Activated CD4-positive, alpha-beta T cell treated with anti-CD3 and anti-CD28 coated beads, Interleukin-2, amount 10 ng/mL, durations not matched to agents 24 days and 14 days (primary cell): ENCODE measurements at regions of chr18 and their contacts with region 1.

Region 1: GRCh38 chr18:58671111-58671631 is at the start of gene MALT1:
- DNase-seq: peak; percentile 98
- H3K4me3 Mint-ChIP-seq: peak within 1 kb of the TSS; percentile 98
- H3K27ac Mint-ChIP-seq: peak within 1 kb of the TSS; percentile 92
- H3K4me1 Mint-ChIP-seq: peaks cover 61% of the 10 kb centered on the region
- H3K27me3 Mint-ChIP-seq: peaks cover 2% of the 10 kb centered on the region
- total RNA-seq, gene MALT1: 22.7 and 24.9 TPM in 2 replicates

Region 2: DNA sequence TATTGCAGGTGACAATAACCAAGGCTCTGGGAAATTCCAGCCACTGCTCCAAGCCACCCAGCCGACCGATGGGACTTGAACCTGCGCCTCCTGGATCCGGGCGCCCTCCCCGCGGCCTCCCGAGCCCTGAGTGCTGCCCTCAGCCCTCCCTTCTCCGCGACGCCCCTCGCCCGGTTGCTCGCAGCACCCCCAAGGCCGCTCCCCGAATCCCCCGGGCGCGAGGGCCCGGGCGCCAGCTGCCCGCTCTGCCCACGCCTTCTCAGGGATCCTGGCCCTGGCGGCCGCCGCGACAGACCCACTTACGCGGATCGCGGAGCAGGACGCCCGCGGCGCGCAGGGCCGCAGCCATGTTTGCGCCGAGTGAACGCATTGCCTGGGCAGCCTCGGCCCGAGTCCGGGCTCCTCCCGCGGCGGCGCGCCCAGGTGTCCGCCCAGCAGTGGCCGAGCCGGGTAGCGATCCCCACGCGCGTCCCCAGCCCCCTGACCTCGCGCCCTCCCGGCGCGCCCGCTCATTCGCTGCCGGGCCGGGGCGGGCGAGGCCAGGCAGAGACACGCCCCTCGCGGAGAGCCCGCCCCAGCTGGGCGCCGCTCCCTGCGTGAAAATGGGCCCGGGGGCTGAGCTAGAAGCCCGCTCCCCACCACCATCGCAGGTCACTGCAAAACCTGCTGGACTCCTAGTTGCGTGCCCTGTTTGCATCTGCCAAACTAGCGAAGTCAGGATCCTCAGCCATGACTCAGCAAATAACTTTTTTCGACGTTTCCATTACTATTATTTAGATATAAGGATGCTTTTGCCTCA is 1084.7 kb before region 1 on chr18 and contains the start of gene FECH:
- intact Hi-C with region 1: loop called (anchors 2 kb)
- DNase-seq: peak; percentile 94
- H3K4me3 Mint-ChIP-seq: peak within 1 kb of the TSS; percentile 85
- H3K27ac Mint-ChIP-seq: peak within 1 kb of the TSS; percentile 80
- H3K4me1 Mint-ChIP-seq: peaks cover 17% of the 10 kb centered on the region
- H3K27me3 Mint-ChIP-seq: no peaks in the 10 kb centered on the region
- total RNA-seq, gene FECH: 22.4 and 25.1 TPM in 2 replicates

Region 3: DNA sequence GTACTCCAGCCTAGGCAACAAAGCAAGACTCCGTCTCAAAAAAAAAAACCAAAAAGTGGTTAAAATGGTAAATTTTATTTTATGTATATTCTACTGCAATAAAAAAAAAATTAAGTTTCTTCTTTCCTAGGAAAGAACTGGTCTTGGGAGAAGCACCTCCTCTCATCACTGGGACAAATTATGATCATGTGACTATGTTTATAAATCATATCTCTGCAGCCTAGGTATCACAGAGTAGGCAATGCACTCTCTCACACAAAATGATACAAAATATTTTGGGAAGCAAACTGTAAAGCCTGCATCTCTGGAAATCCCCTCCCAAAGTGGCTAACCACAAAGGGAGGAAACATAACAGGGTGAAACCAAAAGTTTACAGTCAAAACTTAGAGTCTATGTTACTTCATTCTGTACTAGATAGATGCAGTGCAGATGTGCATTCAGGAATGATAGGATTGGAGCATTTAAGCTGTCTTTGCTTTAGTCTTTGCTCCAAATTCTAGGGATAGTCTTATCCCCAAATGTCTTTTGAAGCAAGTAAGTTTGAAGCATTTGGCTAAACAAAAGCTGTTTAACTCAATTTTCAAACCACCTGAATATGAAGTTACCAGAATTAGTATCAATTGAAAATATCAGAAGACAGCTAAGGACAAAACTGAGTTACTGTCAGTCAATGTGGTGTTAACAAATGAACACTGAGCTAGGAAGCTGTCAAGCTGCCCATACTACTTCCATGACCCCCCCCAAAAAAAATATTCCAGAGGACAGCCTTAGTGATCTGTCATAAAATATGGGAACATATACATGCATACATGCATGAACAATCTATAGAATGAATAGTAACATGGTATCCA is 21.0 kb before region 1 on chr18:
- intact Hi-C with region 1: loop called (anchors 1 kb)
- DNase-seq: peak; percentile 92
- H3K4me3 Mint-ChIP-seq: peak overlapping the region; percentile 41
- H3K27ac Mint-ChIP-seq: peak overlapping the region; percentile 42
- H3K4me1 Mint-ChIP-seq: peaks cover 52% of the 10 kb centered on the region
- H3K27me3 Mint-ChIP-seq: peaks cover 3% of the 10 kb centered on the region

Region 4: GRCh38 chr18:58761241-58761969 is 90.2 kb after region 1 on chr18:
- intact Hi-C with region 1: loop called (anchors 5 kb)
- DNase-seq: peak; percentile 48
- H3K4me3 Mint-ChIP-seq: no peak overlapping the region
- H3K27ac Mint-ChIP-seq: no peak overlapping the region
- H3K4me1 Mint-ChIP-seq: peaks cover 13% of the 10 kb centered on the region
- H3K27me3 Mint-ChIP-seq: peaks cover 26% of the 10 kb centered on the region

Region 5: DNA sequence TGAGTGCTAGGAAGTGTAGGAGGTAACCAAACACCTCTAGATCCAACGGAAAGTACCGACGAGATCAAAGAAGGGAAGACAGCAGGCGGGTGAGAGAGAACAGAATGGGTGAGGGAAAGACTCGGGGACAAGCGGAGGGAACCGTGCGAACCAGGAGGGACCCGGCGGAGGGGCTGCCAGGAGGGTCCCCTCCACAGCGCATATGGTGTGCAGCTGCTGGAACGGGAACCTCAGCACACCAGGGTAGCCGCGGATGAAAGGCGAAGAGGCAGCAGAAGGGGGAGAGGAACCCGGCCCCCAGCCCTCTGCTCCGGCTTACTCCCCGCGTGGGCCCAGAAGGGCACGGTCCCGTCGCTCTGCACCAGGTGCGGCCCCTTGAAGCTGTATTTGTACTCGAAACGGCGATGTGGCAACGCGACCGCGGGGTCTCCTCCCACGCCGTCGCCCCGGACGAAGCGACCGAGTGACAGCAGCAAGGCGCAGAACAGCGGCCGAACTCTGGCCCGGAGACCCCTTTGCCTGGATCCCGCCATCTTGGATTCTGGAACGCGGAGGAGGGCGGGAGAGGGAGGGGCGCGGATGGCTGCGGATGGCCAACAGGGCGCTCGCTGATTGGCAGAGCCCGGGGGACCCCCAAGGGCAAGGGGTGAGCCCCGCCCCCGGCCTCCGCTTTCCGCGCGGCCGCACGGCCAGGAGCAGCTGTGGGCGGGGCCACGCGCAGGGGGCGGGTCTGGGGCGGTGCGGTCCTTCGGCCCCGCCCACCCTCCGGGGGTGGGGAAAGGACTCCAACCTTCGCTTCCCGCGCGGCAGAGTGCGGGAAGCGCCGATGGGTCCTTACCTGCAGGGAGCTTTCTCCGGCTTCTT is 687.8 kb after region 1 on chr18 and contains the start of gene LMAN1:
- intact Hi-C with region 1: loop called (anchors 10 kb)
- DNase-seq: peak; percentile 97
- H3K4me3 Mint-ChIP-seq: peak within 1 kb of the TSS; percentile 88
- H3K27ac Mint-ChIP-seq: peak within 1 kb of the TSS; percentile 90
- H3K4me1 Mint-ChIP-seq: peaks cover 34% of the 10 kb centered on the region
- H3K27me3 Mint-ChIP-seq: peaks cover 6% of the 10 kb centered on the region
- total RNA-seq, gene LMAN1: 141 and 148 TPM in 2 replicates